ENCODE measurements at regions of chr7 and their contacts with region 1.

Region 1: GRCh38 chr7:95675016-95675415 is 78.7 kb upstream of the PDK4 start:
- DNase-seq: no peak

Region 2: DNA sequence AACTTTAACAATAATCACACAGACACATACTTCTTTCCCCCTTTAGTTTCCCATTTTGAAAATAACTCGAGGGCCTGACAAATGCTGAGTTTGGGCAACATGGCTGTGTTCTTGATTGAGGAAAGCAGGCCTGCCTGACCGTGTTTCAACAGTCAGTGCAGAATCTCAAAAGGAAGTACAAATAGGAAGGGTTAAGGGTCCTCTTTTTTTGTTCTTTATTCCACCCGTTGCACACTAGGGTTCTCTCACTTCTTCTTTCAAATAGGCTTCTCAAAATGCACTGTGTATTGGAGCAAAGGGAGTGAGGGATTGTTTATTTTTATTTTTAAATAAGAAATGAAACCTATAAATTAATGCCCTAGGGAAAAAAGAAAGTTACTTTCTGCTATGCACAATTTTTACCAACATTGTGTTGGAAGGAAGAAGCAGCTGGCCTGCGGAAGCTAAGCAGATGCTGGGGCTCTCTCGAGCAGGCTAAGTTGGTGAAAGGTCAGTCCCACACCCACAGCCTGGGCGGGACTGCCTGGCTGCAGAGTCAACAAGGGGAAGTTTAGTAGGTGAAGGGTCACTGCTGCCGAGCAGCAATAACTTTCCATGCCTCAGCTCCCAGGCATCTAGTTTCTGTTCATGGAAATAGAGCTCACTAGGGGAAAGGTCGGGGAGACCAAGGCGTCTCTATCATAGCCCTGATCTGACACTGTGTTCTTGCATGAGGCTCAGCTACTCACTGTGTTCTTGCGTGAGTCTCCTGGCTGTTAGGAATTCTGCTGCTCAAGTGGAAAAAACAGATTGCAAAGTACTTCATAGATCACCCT is 66.5 kb before region 1 on chr7:
- intact Hi-C with region 1: loop called (anchors 10 kb)
- DNase-seq: peak; percentile 21 to 86 (median 64)